ENCODE measurements at regions of chr2 and their contacts with region 1.

Region 1: GRCh38 chr2:237154082-237154638 is 68.5 kb downstream of the COPS8 start:
- DNase-seq: peak in 1 of 2 donors; percentile 83
- H3K4me3 ChIP-seq: no peak overlapping the region
- H3K27ac ChIP-seq: peak overlapping the region; percentile 98
- H3K4me1 ChIP-seq: peaks cover 34% of the 10 kb centered on the region
- H3K27me3 ChIP-seq: no peaks in the 10 kb centered on the region
- CTCF ChIP-seq: peak; percentile 23 to 53 (median 24)
- POLR2A ChIP-seq: no peak

Region 2: DNA sequence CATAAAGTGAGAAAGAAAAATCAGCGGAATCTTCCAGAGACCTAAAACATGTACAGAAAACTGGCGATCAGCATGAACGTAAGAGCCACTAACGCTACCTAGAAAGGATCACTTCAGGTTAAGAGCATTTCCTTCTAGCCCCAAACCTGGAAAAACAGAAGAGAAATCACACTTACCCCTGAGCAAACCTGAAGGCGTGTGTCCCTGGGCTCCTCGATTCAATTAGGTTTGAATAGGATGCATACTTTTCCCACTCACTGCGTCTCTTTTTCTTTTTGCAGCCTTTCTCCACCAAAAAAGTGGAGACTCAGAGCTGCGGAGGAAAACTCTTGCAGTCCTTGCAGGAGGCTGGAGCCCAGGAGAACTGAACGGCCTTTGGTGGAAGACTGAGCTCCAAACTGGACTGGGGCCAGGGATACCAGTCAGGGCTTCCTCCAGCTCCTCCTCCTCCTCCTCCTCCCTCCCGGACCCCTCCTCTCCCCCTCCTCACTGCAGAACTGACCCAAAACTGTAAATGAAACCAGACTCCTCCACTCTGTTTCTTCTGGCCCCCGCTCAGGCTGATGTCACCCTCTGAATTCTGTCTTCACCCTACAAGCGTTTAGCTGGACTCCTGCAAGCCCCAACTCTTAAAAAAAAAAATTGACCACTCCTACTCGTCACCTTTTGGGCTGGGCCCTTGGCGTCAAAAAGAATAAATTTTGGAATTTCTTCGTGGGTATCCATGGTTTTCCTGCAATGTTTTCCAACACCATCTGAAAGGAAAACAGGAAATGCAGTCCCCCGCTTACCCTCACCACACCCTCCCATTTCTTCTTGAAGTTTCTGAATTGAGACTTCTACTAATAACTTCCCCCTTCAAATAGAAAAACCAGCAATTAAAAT is 259.9 kb after region 1 on chr2 and contains the start of gene COL6A3:
- intact Hi-C with region 1: loop called (anchors 5 kb)
- DNase-seq: peak in 1 of 2 donors; percentile 97
- H3K4me3 ChIP-seq: peak within 1 kb of the TSS; percentile 65 to 71
- H3K27ac ChIP-seq: peak within 1 kb of the TSS; percentile 98
- H3K4me1 ChIP-seq: peaks cover 7% of the 10 kb centered on the region
- H3K27me3 ChIP-seq: no peaks in the 10 kb centered on the region
- CTCF ChIP-seq: no peak
- POLR2A ChIP-seq: peak in 1 of 2 donors; percentile 78
- total RNA-seq, gene COL6A3: 315 TPM

Measured in vagina (tissue), 2 donors.